ENCODE measurements at regions of chr10 and their contacts with region 1.

Region 1: GRCh38 chr10:97318772-97319651 is at the start of gene FRAT1:
- DNase-seq: peak; percentile 83 to 92 (median 91)
- H3K4me3 ChIP-seq: peak within 1 kb of the TSS; percentile 88 to 100 (median 96)
- H3K4me3 Mint-ChIP-seq: peak within 1 kb of the TSS; percentile 97 to 100
- H3K27ac ChIP-seq: peak within 1 kb of the TSS; percentile 96 to 98
- H3K27ac Mint-ChIP-seq: peak within 1 kb of the TSS; percentile 99 to 100 (median 100)
- H3K4me1 ChIP-seq: peaks cover 51 to 62% of the 10 kb centered on the region in 2 donors
- H3K4me1 Mint-ChIP-seq: peaks cover 63% of the 10 kb centered on the region
- H3K27me3 ChIP-seq: no peaks in the 10 kb centered on the region
- H3K27me3 Mint-ChIP-seq: peaks cover 0 to 3% (median 2%) of the 10 kb centered on the region in 3 donors
- CTCF ChIP-seq: no peak
- polyA plus RNA-seq, gene FRAT1: 17.0 to 34.4 (median 31.2) TPM

Region 2: GRCh38 chr10:97140041-97140846 is 178.8 kb before region 1 on chr10:
- intact Hi-C with region 1: no loop called
- DNase-seq: peak; percentile 13 to 50 (median 15)
- H3K4me3 ChIP-seq: peak overlapping the region in 1 of 3 experiments; percentile 31
- H3K4me3 Mint-ChIP-seq: peak overlapping the region; percentile 59 to 82
- H3K27ac ChIP-seq: no peak overlapping the region
- H3K27ac Mint-ChIP-seq: peak overlapping the region in 2 of 7 donors; percentile 73
- H3K4me1 ChIP-seq: peaks cover 13 to 18% of the 10 kb centered on the region in 2 donors
- H3K4me1 Mint-ChIP-seq: peaks cover 16% of the 10 kb centered on the region
- H3K27me3 ChIP-seq: no peaks in the 10 kb centered on the region
- H3K27me3 Mint-ChIP-seq: peaks cover 0 to 2% (median 2%) of the 10 kb centered on the region in 3 donors
- CTCF ChIP-seq: no peak

Region 3: DNA sequence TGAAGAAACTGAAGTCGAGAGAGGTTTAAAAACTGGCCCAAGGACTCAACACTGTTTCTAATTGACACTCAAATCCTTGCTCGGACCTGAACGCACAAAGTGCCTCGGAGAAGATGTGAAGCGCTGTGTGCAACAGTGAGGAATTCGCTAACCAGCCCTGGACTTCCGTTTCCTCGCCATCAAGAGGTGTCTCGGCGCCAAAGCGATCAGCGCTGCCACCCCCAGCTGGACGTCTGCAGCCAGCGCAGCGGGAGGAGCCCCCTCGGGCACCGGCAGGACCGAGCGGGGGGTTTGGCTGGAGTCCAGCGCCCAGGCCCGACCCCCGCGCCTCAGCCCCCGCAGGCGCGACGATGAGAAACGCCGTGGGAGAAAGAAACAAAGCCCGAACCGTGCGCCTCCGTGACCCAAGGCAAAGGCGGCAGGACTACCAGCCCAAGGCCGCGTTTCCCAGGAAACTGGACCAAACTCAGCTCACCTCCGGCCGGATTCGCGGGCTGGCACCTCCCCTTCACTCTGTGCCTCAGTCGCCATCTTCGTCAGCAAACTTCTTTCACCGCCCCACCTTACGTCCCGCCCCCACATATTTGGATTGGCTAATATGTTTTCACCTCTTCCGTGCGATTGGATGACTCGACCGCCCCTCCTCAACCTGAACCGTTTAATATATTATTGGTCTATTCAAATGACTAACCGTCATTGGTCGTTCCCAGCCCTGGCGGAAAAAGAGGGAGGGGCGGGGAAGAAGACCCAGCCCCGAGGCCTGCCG is 26.7 kb before region 1 on chr10 and contains the start of gene ARHGAP19:
- intact Hi-C with region 1: loop called (anchors 2 to 5 kb)
- DNase-seq: peak; percentile 96 to 98 (median 97)
- H3K4me3 ChIP-seq: peak within 1 kb of the TSS; percentile 72 to 96 (median 92)
- H3K4me3 Mint-ChIP-seq: peak within 1 kb of the TSS; percentile 89 to 96
- H3K27ac ChIP-seq: peak within 1 kb of the TSS; percentile 77 to 85
- H3K27ac Mint-ChIP-seq: peak within 1 kb of the TSS; percentile 86 to 94 (median 92)
- H3K4me1 ChIP-seq: peaks cover 11 to 12% of the 10 kb centered on the region in 2 donors
- H3K4me1 Mint-ChIP-seq: peaks cover 20% of the 10 kb centered on the region
- H3K27me3 ChIP-seq: no peaks in the 10 kb centered on the region
- H3K27me3 Mint-ChIP-seq: peaks cover 1 to 2% (median 2%) of the 10 kb centered on the region in 3 donors
- CTCF ChIP-seq: no peak
- polyA plus RNA-seq, gene ARHGAP19: 8.3 to 10.6 (median 10.2) TPM

Region 4: DNA sequence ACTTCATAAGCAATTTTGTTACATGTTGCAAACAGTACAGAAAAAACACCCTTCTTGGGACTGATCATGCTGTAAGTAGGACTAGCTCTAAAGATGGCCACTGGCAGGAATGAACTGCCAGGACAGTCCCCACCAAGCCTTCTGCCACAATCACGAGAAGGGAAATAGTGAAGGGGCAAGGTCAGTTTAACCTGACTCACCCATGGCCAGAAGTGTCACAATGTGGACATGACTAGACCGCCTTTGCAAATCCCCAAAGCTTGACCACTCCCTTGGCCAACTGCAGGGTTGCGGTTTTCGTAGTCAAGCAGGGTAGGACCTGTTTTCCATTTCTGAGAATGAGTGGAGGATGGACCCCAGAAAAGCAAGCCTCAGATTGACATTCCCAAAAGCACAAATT is 34.9 kb after region 1 on chr10:
- intact Hi-C with region 1: loop called in 1 of 2 experiments (anchors 5 kb)
- DNase-seq: peak; percentile 95 to 98 (median 97)
- H3K4me3 ChIP-seq: peak overlapping the region in 1 of 3 experiments; percentile 58
- H3K4me3 Mint-ChIP-seq: peak overlapping the region; percentile 63
- H3K27ac ChIP-seq: peak overlapping the region; percentile 80 to 93
- H3K27ac Mint-ChIP-seq: peak overlapping the region; percentile 95 to 98 (median 97)
- H3K4me1 ChIP-seq: peaks cover 64% of the 10 kb centered on the region in 2 donors
- H3K4me1 Mint-ChIP-seq: peaks cover 71% of the 10 kb centered on the region
- H3K27me3 ChIP-seq: no peaks in the 10 kb centered on the region
- H3K27me3 Mint-ChIP-seq: peaks cover 0 to 3% (median 0%) of the 10 kb centered on the region in 3 donors
- CTCF ChIP-seq: no peak

Region 5: DNA sequence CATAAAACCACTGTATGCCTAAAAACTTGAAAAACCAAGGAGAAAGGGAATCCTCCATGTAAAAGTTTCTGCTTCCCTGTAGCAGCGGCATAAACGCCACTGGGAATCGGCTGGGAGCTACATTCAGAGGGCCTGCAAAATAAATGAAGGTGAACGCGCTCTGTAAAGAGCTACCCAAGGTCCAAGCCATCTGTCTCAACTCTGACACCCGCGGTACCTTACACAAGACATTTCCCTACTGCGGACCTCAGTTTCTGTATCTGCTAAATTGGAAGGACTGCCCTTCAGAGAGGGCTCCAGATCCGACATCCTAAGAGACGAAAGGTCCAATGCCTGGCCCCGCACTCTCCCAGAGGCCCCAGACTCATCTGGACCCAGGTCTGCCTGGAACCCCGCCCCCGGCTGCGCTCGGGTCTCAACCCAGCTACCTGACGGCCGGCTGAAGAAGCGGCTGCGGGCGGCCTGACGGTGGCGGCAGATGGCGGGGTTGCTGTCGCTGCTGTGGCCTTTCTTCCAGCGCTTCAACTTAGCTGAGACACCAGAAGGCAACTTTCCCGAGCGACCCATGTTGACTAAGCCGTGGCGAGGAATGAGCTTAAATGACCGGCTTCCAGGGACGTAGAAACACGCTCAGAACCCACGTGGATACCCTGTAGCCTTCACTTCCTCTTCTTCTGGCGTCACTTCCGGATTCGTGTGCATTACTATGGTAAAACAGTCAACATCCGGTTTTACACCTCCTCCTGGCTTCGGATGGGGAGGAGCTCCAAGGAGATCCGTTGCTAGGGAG is 81.8 kb after region 1 on chr10 and contains the start of gene RRP12:
- intact Hi-C with region 1: loop called in 1 of 2 experiments (anchors 2 kb)
- DNase-seq: peak; percentile 98 to 100 (median 99)
- H3K4me3 ChIP-seq: peak within 1 kb of the TSS; percentile 73 to 97 (median 85)
- H3K4me3 Mint-ChIP-seq: peak within 1 kb of the TSS; percentile 91 to 94
- H3K27ac ChIP-seq: peak within 1 kb of the TSS; percentile 87 to 98
- H3K27ac Mint-ChIP-seq: peak within 1 kb of the TSS; percentile 97 to 100 (median 98)
- H3K4me1 ChIP-seq: peaks cover 49 to 59% of the 10 kb centered on the region in 2 donors
- H3K4me1 Mint-ChIP-seq: peaks cover 36% of the 10 kb centered on the region
- H3K27me3 ChIP-seq: no peaks in the 10 kb centered on the region
- H3K27me3 Mint-ChIP-seq: peaks cover 0 to 2% (median 0%) of the 10 kb centered on the region in 3 donors
- CTCF ChIP-seq: no peak
- polyA plus RNA-seq, gene RRP12: 31.0 to 98.7 (median 44.3) TPM

Measured in CD14-positive monocyte (primary cell).